Posterior cingulate gyrus (tissue), 11 donors: ENCODE measurements at regions of chr1 and their contacts with region 1.

Region 1: GRCh38 chr1:200488375-200489165 is 78.7 kb upstream of the ZNF281 start:
- DNase-seq: peak in 5 of 10 donors; percentile 16 to 59 (median 51)

Region 2: GRCh38 chr1:200139661-200140250 is 348.8 kb before region 1 on chr1:
- intact Hi-C with region 1: loop called (anchors 10 kb)
- DNase-seq: no peak

Region 3: DNA sequence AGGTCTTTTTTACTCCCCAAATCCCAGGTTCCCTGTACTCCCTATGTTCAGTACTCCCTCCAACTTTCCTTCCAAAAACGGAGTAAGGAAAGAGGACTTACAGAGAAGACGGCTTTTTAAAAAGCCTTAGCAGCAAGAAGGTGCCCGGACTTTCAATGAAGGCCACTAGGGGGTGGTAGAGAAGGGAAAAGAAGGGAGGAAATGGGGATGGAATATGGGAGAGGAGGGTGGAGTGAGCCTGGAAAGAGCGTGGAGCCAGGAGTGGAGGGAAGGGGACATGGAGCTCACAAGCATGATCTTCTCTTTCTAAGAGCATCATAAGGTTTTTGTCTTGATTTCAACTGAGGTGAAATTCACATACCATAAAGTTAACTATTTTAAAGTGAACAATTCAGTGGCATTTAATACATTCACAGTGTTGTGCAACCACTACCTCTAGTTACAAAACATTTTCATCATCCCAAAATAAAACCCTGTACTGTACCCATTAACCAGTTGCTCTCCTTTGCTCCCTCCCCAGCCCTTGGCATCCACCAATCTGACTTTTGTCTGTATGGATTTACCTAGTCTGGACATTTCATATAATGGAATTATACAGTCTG is 208.7 kb before region 1 on chr1:
- intact Hi-C with region 1: loop called (anchors 2 kb)
- DNase-seq: peak in 3 of 10 donors; percentile 14 to 59 (median 53)

Region 4: DNA sequence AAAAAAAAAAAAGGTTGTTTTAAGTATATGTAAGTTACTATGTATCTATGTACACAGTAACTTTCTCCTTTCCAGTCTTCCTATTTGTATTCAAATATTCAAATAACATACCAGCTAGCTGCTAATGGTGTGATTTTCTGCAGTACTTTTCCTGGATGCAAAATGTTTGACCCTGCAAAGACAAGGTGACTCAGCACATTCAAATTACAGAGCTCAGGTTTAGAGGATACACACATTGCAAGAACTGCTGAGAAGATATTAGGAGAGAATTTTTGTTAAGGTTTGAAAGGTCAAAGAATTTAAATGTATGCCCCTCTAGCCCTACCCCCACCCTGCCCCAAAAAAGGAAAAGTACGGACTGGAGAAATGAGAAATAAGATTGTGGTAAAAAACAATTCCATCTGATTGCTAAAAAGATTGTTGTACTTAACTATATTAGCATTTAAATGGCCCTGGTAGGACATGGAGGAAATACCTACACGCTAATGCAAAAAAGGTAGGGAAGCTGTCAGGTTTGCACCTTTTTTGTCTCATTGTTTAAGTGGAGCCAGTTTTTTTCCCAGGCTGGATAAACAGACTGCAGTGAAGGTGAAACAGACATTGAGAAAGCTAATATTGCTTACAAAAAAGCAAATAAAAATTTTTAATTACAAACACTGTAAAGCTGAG is 124.3 kb before region 1 on chr1:
- intact Hi-C with region 1: no loop called
- DNase-seq: no peak

Region 5: DNA sequence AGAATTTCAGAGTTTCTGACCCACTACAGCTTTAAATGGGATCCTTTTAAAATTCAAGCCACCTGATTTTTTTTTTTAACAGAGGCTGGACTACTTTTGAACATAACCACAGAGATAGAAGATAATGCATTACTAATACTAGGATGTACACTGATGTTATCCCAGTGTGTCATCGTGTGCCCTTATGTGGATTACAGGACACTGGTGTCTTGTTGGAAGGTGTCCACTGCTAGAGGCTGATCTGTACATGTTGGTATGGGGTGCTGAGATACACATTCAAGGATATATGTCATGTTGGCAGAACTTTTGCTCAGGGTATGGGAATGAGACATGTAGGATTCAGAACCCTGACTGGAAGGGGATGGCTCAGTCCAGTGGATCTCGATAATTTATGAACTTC is 462.4 kb after region 1 on chr1:
- intact Hi-C with region 1: no loop called
- DNase-seq: no peak